PC-9 (cell line): ENCODE measurements at regions of chr5 and their contacts with region 1.

Region 1: DNA sequence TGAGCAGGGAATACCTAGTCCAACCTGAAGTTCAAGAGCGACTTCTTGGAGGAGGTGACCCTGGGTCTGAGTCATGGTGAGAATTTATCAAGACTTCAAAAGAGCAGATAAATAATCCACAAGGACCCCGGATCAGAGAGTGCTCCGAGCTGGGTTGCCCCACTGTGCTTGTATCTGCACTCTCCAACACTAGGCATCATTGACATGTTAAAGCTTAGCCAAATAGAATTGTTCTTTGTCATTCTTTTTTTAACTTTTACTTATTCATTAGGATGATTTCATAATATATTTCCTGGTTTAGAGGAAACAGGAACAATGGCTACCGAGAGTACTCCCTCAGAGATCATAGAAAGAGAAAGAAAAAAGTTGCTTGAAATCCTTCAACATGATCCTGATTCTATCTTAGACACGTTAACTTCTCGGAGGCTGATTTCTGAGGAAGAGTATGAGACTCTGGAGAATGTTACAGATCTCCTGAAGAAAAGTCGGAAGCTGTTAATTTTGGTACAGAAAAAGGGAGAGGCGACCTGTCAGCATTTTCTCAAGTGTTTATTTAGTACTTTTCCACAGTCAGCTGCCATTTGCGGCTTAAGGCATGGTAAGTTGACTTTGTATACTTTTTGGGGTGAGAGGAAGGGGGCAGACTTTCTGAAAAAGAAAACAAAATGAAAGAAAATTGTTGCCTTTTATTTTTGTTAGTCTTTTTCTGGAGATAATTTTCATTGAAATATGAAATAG is at the start of gene CARD6:
- DNase-seq: peak; percentile 33 to 79
- H3K4me3 ChIP-seq: peak within 1 kb of the TSS; percentile 60
- H3K27ac ChIP-seq: peak within 1 kb of the TSS; percentile 84
- H3K4me1 ChIP-seq: peaks cover 41% of the 10 kb centered on the region
- H3K27me3 ChIP-seq: no peaks in the 10 kb centered on the region
- CTCF ChIP-seq: 0 out of 2 replicates have a peak, but pooled peaks have one; percentile 26
- total RNA-seq, gene CARD6: 10.8 and 16.1 TPM in 2 replicates

Region 2: GRCh38 chr5:40871177-40871576 is 29.9 kb after region 1 on chr5:
- CTCF ChIA-PET with region 1: no interaction called
- POLR2A ChIA-PET with region 1: interaction called, 7 read pairs
- intact Hi-C with region 1: loop called (anchors 2 kb)
- DNase-seq: peak; percentile 52 to 55
- H3K4me3 ChIP-seq: peak overlapping the region; percentile 0; the same call in 1 of the 2 replicates
- H3K27ac ChIP-seq: no peak overlapping the region
- H3K4me1 ChIP-seq: 0 out of 2 replicates have a peak, but pooled peaks cover 6% of the 10 kb centered on the region
- H3K27me3 ChIP-seq: no peaks in the 10 kb centered on the region
- CTCF ChIP-seq: no peak

Region 3: DNA sequence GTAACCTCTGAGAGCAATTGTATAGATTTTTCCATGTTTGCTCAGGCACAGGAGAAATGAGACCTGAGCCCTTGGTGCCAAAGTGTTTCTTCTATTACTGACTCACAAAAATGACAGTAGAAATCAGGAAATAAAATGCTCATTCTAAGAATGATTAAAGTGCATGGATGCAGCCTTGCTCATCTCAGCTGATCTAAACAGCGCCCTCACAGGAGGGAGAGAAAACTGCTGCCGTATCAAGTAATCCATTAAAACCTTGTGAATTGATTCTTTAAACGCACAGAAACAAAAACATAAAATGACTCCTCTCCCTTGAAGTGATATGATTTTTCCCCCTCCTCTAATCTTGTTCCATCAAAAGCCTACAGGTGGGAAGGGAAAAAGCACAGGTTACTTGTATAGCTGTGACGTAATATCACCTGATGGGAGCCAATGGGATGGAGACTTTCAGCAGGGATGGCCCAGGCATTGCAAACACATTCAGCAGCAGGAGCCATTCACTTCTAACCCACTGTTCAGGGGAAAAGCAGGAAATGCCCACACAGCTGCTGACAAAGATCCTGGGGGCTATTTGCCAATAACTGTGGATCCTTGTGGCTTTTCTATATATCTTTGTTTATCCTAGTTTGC is 592.4 kb after region 1 on chr5:
- CTCF ChIA-PET with region 1: no interaction called
- POLR2A ChIA-PET with region 1: interaction called, 34 read pairs
- intact Hi-C with region 1: no loop called
- DNase-seq: no peak
- H3K4me3 ChIP-seq: no peak overlapping the region
- H3K27ac ChIP-seq: no peak overlapping the region
- H3K4me1 ChIP-seq: no peaks in the 10 kb centered on the region
- H3K27me3 ChIP-seq: no peaks in the 10 kb centered on the region
- CTCF ChIP-seq: peak; percentile 62

Region 4: GRCh38 chr5:41508696-41509398 is 667.6 kb after region 1 on chr5:
- CTCF ChIA-PET with region 1: no interaction called
- POLR2A ChIA-PET with region 1: interaction called, 12 read pairs
- intact Hi-C with region 1: no loop called
- DNase-seq: no peak
- H3K4me3 ChIP-seq: no peak overlapping the region
- H3K27ac ChIP-seq: peak overlapping the region; percentile 83
- H3K4me1 ChIP-seq: peaks cover 22% of the 10 kb centered on the region
- H3K27me3 ChIP-seq: no peaks in the 10 kb centered on the region
- CTCF ChIP-seq: no peak